Left colon (tissue), 2 donors: ENCODE measurements at regions of chr4 and their contacts with region 1.

Region 1: DNA sequence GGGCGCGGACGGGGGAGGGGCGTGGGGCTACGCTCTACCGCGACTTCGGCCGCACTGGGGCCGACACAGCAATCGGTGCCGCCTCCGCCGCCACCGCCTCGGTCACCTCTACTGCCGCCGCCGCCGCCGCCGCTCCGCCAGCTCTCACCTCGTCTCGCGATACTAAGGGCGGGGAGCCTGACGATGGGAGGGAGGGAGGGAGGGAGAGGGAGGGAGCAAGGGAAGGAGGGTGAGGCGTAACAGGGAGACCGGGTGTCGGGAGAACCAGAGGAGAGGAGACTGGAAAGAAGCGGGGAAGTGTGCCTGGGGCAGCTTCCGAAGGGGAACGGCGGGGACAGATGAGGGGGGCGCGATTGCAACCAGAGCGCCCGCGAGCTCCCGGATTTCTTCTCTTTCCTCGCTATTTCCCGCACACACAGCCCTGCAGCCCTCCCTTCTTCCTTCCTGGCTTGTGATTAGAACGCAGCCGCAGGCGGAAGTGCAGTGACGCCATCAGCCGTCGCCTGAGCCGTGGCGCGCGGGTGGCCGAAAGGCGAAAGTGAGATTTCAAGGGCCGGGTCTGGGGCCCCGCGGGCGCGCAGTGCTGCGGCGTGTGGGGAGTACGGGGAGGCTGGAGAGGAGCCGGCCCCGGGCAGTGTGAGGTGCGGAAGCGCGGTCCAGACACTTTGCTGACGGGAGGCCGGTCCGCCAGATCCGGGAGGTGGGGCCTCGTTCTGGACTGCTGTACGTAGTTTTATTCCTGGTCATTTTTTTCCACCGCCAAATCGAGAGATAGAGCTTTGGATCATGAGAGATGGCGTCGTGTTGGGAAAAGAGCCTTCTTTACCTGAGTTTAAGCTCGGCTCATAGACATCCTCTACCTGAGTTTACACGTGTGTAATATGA is at the start of gene ANKRD17:
- DNase-seq: peak; percentile 93 to 96
- ATAC-seq: peak; percentile 83
- total RNA-seq, gene ANKRD17: 58.3 to 61.1 TPM

Region 2: GRCh38 chr4:73069338-73070073 is 189.4 kb before region 1 on chr4 and contains the start of gene COX18:
- intact Hi-C with region 1: loop called in 1 of 2 experiments (anchors 5 kb)
- DNase-seq: peak; percentile 98
- ATAC-seq: peak; percentile 88
- total RNA-seq, gene COX18: 17.0 to 18.1 TPM

Region 3: GRCh38 chr4:73152893-73153292 is 106.0 kb before region 1 on chr4:
- intact Hi-C with region 1: no loop called
- DNase-seq: no peak
- ATAC-seq: no peak

Region 4: GRCh38 chr4:73816814-73817213 is 557.9 kb after region 1 on chr4:
- intact Hi-C with region 1: no loop called
- DNase-seq: no peak
- ATAC-seq: no peak